Adrenal gland (tissue), 19 donors: ENCODE measurements at regions of chrX and their contacts with region 1.

Region 1: GRCh38 chrX:83630662-83631061 is 122.6 kb downstream of the POU3F4 start:
- DNase-seq: no peak
- H3K4me3 ChIP-seq: no peak overlapping the region
- H3K27ac ChIP-seq: no peak overlapping the region
- H3K4me1 ChIP-seq: no peaks in the 10 kb centered on the region
- H3K27me3 ChIP-seq: no peaks in the 10 kb centered on the region
- CTCF ChIP-seq: no peak
- POLR2A ChIP-seq: no peak

Region 2: GRCh38 chrX:83469551-83469950 is 161.1 kb before region 1 on chrX:
- intact Hi-C with region 1: loop called in 1 of 2 experiments (anchors 10 kb)
- DNase-seq: peak; percentile 29 to 55 (median 35)
- H3K4me3 ChIP-seq: no peak overlapping the region
- H3K27ac ChIP-seq: no peak overlapping the region
- H3K4me1 ChIP-seq: no peaks in the 10 kb centered on the region
- H3K27me3 ChIP-seq: no peaks in the 10 kb centered on the region
- CTCF ChIP-seq: peak; percentile 29 to 55 (median 40)
- POLR2A ChIP-seq: no peak

Region 3: GRCh38 chrX:83845397-83845796 is 214.7 kb after region 1 on chrX:
- intact Hi-C with region 1: no loop called
- DNase-seq: peak in 5 of 7 donors; percentile 1 to 29 (median 20)
- H3K4me3 ChIP-seq: no peak overlapping the region
- H3K27ac ChIP-seq: no peak overlapping the region
- H3K4me1 ChIP-seq: no peaks in the 10 kb centered on the region
- H3K27me3 ChIP-seq: no peaks in the 10 kb centered on the region
- CTCF ChIP-seq: peak in 5 of 6 experiments; percentile 15 to 74 (median 49)
- POLR2A ChIP-seq: no peak